ENCODE measurements at regions of chr7 and their contacts with region 1.

Region 1: DNA sequence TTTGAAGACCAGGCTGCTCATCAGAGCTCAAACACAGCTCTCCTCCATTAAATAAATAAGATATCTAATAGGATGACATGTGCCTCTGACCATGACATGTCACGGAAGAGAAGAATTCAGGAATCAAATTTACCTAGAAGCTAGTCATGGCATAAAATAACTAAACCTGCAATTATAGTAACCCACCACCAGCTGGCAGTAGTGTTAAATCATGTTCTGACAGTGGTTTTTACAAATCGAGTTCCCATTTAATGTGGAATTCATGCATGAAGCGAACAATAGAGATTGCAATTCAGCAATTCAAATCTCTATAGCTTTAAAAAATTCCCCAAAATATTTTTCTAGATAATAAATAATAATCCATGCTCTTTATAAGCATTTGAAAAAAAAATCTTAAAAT is 74.6 kb upstream of the IKZF1 start:
- DNase-seq: no peak
- H3K4me3 Mint-ChIP-seq: no peak overlapping the region
- H3K27ac Mint-ChIP-seq: no peak overlapping the region
- H3K4me1 Mint-ChIP-seq: peaks cover 38% of the 10 kb centered on the region
- H3K27me3 Mint-ChIP-seq: no peaks in the 10 kb centered on the region

Region 2: GRCh38 chr7:50212666-50213621 is 17.0 kb before region 1 on chr7:
- intact Hi-C with region 1: loop called (anchors 1 kb)
- DNase-seq: no peak
- H3K4me3 Mint-ChIP-seq: peak overlapping the region; percentile 64
- H3K27ac Mint-ChIP-seq: peak overlapping the region; percentile 92
- H3K4me1 Mint-ChIP-seq: peaks cover 90% of the 10 kb centered on the region
- H3K27me3 Mint-ChIP-seq: no peaks in the 10 kb centered on the region

Region 3: DNA sequence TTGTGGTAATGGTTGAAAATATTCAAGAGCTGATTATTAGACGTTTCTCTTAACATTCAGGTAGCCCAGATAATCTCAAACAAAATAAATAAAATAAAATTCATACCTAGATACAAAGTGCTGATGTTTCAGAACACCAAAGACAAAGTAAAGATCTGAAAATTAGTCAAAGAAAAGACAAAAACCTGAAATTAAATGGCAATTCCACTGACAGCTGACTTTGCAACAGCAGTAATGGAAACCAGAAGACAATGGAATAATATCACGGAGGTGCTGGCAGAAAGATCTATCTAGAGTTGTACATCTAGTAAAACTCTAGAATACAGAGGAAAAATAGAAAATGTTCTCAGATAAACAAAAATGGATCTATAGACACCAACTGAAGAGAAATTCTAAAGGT is 16.6 kb after region 1 on chr7:
- intact Hi-C with region 1: loop called (anchors 2 kb)
- DNase-seq: no peak
- H3K4me3 Mint-ChIP-seq: no peak overlapping the region
- H3K27ac Mint-ChIP-seq: no peak overlapping the region
- H3K4me1 Mint-ChIP-seq: peaks cover 9% of the 10 kb centered on the region
- H3K27me3 Mint-ChIP-seq: no peaks in the 10 kb centered on the region